GM12878 (cell line): ENCODE measurements at regions of chr17 and their contacts with region 1.

Region 1: GRCh38 chr17:3647769-3648555 is 11.4 kb downstream of the CTNS start:
- DNase-seq: no peak
- ATAC-seq: peak; percentile 87
- H3K4me3 ChIP-seq: no peak overlapping the region
- H3K27ac ChIP-seq: no peak overlapping the region
- H3K4me1 ChIP-seq: peaks cover 4% of the 10 kb centered on the region
- H3K27me3 ChIP-seq: no peaks in the 10 kb centered on the region
- CTCF ChIP-seq: peak; percentile 48 to 63 (median 49)
- EP300 ChIP-seq: no peak
- POLR2A ChIP-seq: no peak
- RAD21 ChIP-seq: peak; percentile 40

Region 2: DNA sequence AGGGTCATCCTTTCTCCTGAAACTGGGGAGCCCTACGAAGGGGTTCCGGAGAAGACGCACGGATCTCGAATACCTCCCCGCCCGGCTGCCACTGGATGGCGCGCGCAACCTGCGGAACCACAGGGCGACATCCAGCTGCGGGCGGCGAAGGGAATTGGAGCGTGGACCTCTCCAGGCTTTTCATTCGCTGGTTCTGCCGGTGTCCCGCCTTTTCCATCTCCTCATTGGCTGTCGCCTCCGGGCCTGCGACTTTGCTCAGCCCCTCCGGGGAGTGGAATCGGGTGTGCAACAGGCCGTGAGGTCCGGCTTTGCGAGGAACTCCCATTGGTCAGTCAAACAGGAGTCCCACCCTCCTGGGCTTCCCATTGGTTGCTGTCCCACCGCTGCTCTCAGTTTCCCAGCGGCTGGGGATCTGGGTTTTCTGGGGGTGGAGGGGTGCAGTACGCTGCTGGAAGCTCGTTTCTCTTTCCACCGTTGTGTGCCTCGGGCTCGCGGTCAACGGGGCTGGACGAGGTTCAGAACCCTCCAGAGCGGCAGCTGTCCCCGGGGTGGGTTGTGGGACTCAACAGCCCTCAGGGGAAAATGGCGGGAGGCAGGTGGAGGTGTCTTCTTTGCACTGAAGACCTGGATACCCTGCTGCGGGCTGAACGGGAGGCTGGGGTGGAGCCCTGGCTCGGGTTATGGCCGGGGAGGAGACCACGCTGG is 599.0 kb before region 1 on chr17:
- CTCF ChIA-PET with region 1: no interaction called
- POLR2A ChIA-PET with region 1: no interaction called
- RAD21 ChIA-PET with region 1: no interaction called
- SMC1A ChIA-PET with region 1: no interaction called
- in situ Hi-C with region 1: loop called (anchors 5 kb)
- intact Hi-C with region 1: loop called (anchors 10 kb)
- DNase-seq: peak; percentile 78
- ATAC-seq: peak; percentile 100
- H3K4me3 ChIP-seq: peak overlapping the region; percentile 62
- H3K27ac ChIP-seq: no peak overlapping the region
- H3K4me1 ChIP-seq: no peaks in the 10 kb centered on the region
- H3K27me3 ChIP-seq: no peaks in the 10 kb centered on the region
- CTCF ChIP-seq: peak; percentile 59 to 77 (median 64)
- EP300 ChIP-seq: no peak
- POLR2A ChIP-seq: peak; percentile 55
- RAD21 ChIP-seq: peak; percentile 70

Region 3: GRCh38 chr17:3693829-3694231 is 45.9 kb after region 1 on chr17:
- CTCF ChIA-PET with region 1: no interaction called
- POLR2A ChIA-PET with region 1: no interaction called
- RAD21 ChIA-PET with region 1: no interaction called
- SMC1A ChIA-PET with region 1: no interaction called
- in situ Hi-C with region 1: no loop called
- intact Hi-C with region 1: no loop called
- DNase-seq: peak; percentile 91
- ATAC-seq: peak; percentile 86
- H3K4me3 ChIP-seq: no peak overlapping the region
- H3K27ac ChIP-seq: 0 out of 2 replicates have a peak overlapping the region, but pooled peaks have one; percentile 11
- H3K4me1 ChIP-seq: peaks cover 32% of the 10 kb centered on the region
- H3K27me3 ChIP-seq: no peaks in the 10 kb centered on the region
- CTCF ChIP-seq: no peak
- EP300 ChIP-seq: peak in 1 of 2 experiments; percentile 72; a peak in 2 of 4 replicates
- POLR2A ChIP-seq: 0 out of 2 replicates have a peak, but pooled peaks have one; percentile 21
- RAD21 ChIP-seq: no peak